ENCODE measurements at regions of chr13 and their contacts with region 1.

Region 1: GRCh38 chr13:31909864-31910551 is 121.6 kb upstream of the FRY start:
- DNase-seq: peak; percentile 72 to 85 (median 76)
- H3K4me3 ChIP-seq: peak overlapping the region in 1 of 7 experiments; percentile 6
- H3K27ac ChIP-seq: no peak overlapping the region
- H3K4me1 ChIP-seq: peaks cover 5 to 22% (median 14%) of the 10 kb centered on the region in 4 experiments
- H3K27me3 ChIP-seq: peaks cover 0 to 3% (median 0%) of the 10 kb centered on the region in 5 experiments

Region 2: DNA sequence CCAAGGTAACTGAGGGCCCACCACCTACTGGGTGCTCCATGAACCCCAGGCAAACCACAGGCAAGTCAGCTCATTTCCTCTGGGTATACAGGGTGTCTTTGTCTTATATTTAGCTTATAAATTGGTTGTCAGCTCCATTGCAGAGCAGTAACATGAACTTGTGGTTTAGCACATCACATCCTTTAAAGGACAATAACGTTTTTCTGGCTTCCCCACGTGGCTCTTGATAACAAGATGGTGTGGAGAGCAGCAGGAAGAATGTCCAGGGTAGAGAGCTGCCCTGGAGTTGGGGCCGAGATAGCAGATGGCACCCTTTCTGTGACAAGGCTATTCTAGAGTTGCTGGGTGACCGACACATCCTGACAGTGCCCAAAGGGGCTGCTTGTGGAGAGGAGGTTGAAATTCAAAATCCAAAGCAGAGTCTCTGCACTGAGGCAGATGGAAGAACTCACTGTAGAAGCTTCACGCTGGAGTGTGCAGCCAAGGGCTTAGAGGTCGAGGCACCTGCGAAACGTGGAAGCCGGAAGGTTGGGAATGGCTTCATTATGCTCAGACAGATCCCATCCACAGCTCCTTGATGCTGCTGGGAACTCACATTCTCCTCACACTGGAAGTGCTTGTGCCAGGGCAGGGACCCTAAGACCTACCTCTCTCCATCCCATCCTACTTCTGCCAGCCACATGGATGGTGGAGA is 11.5 kb before region 1 on chr13:
- CTCF ChIA-PET with region 1: interaction called, 13 read pairs
- POLR2A ChIA-PET with region 1: no interaction called
- DNase-seq: peak in 2 of 3 donors; percentile 41 to 53
- H3K4me3 ChIP-seq: no peak overlapping the region
- H3K27ac ChIP-seq: no peak overlapping the region
- H3K4me1 ChIP-seq: peaks cover 6 to 41% (median 25%) of the 10 kb centered on the region in 4 experiments
- H3K27me3 ChIP-seq: peaks cover 0 to 3% (median 0%) of the 10 kb centered on the region in 5 experiments

Region 3: DNA sequence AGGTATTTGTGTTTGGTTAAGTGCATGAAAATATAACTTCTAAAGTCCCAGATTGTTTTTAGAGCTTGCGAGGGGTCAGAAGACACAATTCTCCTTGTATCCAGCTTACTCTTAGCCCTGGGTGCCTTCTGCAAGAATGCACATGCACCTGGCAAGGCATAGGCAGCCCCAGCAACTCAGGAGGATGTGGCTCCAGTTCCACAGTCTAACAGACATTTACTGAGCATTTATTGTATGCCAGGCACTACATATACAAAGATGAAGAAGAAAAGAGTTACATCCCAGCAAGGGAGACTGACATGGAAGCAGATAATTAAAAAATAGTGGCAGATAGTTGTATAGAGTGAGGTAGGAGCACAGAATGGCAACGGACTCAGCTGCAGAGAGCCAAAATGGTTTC is 20.5 kb after region 1 on chr13:
- CTCF ChIA-PET with region 1: interaction called, 12 read pairs
- POLR2A ChIA-PET with region 1: no interaction called
- DNase-seq: no peak
- H3K4me3 ChIP-seq: no peak overlapping the region
- H3K27ac ChIP-seq: no peak overlapping the region
- H3K4me1 ChIP-seq: peaks cover 13 to 41% (median 24%) of the 10 kb centered on the region in 4 experiments
- H3K27me3 ChIP-seq: no peaks in the 10 kb centered on the region

Region 4: DNA sequence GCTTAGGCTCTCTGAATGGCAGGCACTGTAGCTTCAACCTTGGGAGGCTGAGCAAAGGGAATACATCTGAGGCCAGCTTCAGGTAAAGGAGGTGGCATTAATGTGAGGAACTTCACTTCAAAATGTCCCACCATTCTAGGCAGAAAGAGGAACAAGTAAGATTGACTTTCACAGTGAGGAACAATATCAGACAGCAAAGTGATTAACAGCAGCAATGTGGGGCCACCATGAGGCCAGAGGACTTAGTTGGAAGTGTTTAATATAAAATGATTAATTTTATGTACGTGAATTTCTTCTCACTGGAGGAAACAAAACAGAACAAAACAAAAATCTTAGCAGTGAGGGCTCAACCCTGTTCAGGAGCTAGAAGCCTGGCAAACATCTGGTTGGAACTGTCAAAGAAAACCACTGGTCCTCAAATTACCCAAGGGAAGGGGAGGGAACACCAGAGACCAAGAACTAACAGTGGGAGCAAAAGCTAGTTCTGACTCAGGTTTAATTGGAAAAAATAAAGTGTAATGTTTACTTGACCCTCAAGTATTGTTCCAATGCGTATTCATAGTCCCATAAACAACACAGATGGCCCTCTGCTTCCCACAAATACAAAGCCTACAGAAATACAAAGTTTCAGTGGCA is 77.6 kb after region 1 on chr13:
- CTCF ChIA-PET with region 1: interaction called, 40 read pairs
- POLR2A ChIA-PET with region 1: no interaction called
- DNase-seq: peak; percentile 57 to 88 (median 83)
- H3K4me3 ChIP-seq: no peak overlapping the region
- H3K27ac ChIP-seq: no peak overlapping the region
- H3K4me1 ChIP-seq: peaks cover under 1 to 12% (median 7%) of the 10 kb centered on the region in 4 experiments
- H3K27me3 ChIP-seq: no peaks in the 10 kb centered on the region

Region 5: DNA sequence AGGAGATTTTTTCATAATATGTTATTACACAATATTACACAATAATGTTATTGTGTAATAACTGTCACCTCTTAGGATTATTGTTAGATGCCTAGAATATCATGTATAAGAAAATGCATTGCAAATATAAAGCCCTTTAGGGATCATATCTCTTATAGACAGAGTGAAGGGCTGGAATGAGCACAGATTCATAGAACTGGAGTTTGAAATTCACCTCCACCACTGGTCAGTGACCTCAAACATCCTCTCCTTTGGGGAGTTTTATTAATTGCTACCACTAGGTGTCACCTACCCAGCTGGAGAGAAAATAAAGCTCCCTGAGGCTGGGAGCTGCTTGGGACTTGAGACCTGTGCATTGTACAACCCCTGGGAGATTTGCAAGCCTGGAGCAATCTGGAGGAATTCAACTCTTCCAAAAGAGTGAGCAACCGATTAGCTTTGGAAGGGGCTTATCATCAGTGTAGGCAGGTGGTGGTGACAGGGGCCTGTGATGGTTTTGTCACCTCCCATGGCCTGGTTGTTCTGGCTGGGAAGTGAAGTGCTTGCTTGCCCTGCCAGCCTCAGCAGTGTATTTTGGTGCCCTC is 91.3 kb after region 1 on chr13:
- CTCF ChIA-PET with region 1: interaction called, 3 read pairs
- POLR2A ChIA-PET with region 1: interaction called, 11 read pairs
- DNase-seq: peak; percentile 34 to 62 (median 60)
- H3K4me3 ChIP-seq: no peak overlapping the region
- H3K27ac ChIP-seq: no peak overlapping the region
- H3K4me1 ChIP-seq: peaks cover 0 to 6% (median 1%) of the 10 kb centered on the region in 4 experiments
- H3K27me3 ChIP-seq: no peaks in the 10 kb centered on the region

Measured in common myeloid progenitor, CD34-positive (primary cell).